GM10248 (cell line): ENCODE measurements at regions of chr14 and their contacts with region 1.

Region 1: GRCh38 chr14:68248481-68249255 is 429.1 kb downstream of the RAD51B start:
- DNase-seq: peak; percentile 47
- CTCF ChIP-seq: peak; percentile 44

Region 2: GRCh38 chr14:67943947-67944346 is 304.7 kb before region 1 on chr14:
- CTCF ChIA-PET with region 1: interaction called, 12 read pairs
- POLR2A ChIA-PET with region 1: no interaction called
- DNase-seq: peak; percentile 39
- CTCF ChIP-seq: peak; percentile 82

Region 3: GRCh38 chr14:68261092-68261842 is 12.6 kb after region 1 on chr14:
- CTCF ChIA-PET with region 1: interaction called, 31 read pairs
- POLR2A ChIA-PET with region 1: no interaction called
- DNase-seq: no peak
- CTCF ChIP-seq: no peak

Region 4: GRCh38 chr14:68359837-68360552 is 111.3 kb after region 1 on chr14:
- CTCF ChIA-PET with region 1: interaction called, 23 read pairs
- POLR2A ChIA-PET with region 1: no interaction called
- DNase-seq: no peak
- CTCF ChIP-seq: no peak

Region 5: GRCh38 chr14:68449561-68450295 is 201.1 kb after region 1 on chr14:
- CTCF ChIA-PET with region 1: interaction called, 10 read pairs
- POLR2A ChIA-PET with region 1: no interaction called
- DNase-seq: no peak
- CTCF ChIP-seq: no peak

Region 6: DNA sequence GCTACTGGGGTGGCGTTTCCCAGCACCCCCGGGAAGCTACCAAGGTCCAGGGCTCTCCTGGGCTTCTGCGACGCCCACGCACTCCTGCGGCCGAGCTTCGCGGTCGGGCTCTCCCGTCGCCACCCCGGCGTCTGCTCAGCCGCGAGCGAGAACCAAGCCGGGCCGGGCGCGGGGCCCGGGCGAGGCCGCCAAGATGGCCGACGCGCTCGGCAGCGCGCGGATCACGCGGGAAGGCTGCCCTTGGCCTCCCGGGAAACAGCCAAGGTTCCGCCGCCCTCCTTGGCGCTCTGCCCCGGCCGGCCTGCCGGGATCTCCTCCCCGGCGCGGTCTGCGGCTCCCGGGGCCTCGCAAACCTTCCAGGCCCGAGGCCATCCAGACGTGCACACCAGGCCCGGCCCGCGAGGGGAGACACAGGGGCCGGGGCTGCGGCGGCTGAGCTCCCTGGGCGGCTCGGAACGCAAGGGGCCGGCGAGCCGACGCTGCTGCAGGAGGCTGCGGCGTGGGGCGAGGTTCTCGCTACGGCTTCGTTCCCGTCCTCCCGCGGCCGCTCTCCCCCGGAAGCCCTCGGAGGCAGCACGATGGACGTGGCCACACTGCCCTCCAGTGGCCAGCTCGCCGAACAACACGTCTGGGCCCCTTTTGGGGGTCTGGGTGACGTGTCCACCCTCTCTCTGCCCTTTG is 567.7 kb after region 1 on chr14:
- CTCF ChIA-PET with region 1: interaction called, 176 read pairs
- POLR2A ChIA-PET with region 1: no interaction called
- DNase-seq: peak; percentile 89
- CTCF ChIP-seq: peak; percentile 90